B cell (primary cell): ENCODE measurements at regions of chr2 and their contacts with region 1.

Region 1: DNA sequence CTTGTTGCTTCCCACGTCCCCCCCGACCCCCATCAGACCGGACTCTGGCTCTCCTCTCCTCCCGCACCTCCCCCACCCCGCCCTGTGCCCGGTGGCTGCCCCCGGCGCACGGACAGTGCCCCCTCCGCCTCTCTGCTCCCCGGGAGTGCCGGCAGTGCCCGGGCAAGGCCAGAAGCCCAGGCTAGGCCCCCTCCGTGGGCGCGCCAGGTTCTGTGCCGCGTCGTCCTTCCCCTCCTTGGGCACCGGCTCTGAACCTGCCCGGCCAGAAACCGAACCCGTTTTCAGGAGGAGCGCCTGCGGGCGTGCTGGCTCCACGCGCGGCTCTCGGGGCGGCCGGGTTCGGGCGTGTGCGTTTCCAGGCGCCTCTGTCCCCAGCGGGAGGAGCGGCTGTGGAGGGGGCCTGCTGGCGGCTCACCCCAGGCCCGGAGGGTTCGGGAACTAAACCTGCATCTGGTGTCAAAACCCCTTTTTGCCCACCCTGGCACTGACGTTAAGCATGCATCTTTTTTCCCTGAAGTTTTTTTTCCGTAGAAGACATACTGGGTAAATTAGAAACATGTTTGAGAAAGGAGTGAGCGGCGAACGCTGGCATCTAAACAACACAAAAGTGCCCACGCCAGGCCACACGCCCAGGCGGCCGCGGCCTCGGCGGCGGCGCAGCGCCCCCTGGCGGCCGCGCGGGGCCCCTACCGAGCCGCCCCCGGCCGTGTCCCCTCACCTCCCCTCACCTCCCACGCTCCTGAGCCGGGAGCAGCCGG is 123.9 kb upstream of the SLC1A4 start:
- DNase-seq: peak; percentile 86
- ATAC-seq: peak; percentile 54
- H3K4me3 ChIP-seq: peak overlapping the region; percentile 46 to 88 (median 64)
- H3K4me3 Mint-ChIP-seq: no peak overlapping the region
- H3K27ac ChIP-seq: peak overlapping the region; percentile 91 to 93
- H3K27ac Mint-ChIP-seq: peak overlapping the region; percentile 53
- H3K4me1 ChIP-seq: peaks cover 49 to 60% of the 10 kb centered on the region in 2 donors
- H3K4me1 Mint-ChIP-seq: peaks cover 1% of the 10 kb centered on the region
- H3K27me3 ChIP-seq: no peaks in the 10 kb centered on the region
- H3K27me3 Mint-ChIP-seq: no peaks in the 10 kb centered on the region
- CTCF ChIP-seq: peak; percentile 85

Region 2: GRCh38 chr2:64831134-64831976 is 33.9 kb before region 1 on chr2:
- CTCF ChIA-PET with region 1: interaction called, 67 read pairs
- POLR2A ChIA-PET with region 1: no interaction called
- intact Hi-C with region 1: loop called (anchors 1 kb)
- DNase-seq: peak; percentile 82
- ATAC-seq: peak; percentile 91
- H3K4me3 ChIP-seq: peak overlapping the region in 3 of 5 experiments; percentile 11 to 38 (median 16)
- H3K4me3 Mint-ChIP-seq: peak overlapping the region; percentile 63
- H3K27ac ChIP-seq: no peak overlapping the region
- H3K27ac Mint-ChIP-seq: peak overlapping the region; percentile 77
- H3K4me1 ChIP-seq: peaks cover 8 to 12% of the 10 kb centered on the region in 2 donors
- H3K4me1 Mint-ChIP-seq: peaks cover 13% of the 10 kb centered on the region
- H3K27me3 ChIP-seq: no peaks in the 10 kb centered on the region
- H3K27me3 Mint-ChIP-seq: no peaks in the 10 kb centered on the region
- CTCF ChIP-seq: peak; percentile 96